GM13976 (cell line): ENCODE measurements at regions of chr3 and their contacts with region 1.

Region 1: GRCh38 chr3:11335056-11335608 is 62.9 kb downstream of the ATG7 start:
- DNase-seq: peak; percentile 69
- CTCF ChIP-seq: peak; percentile 62

Region 2: GRCh38 chr3:10945683-10946287 is 389.3 kb before region 1 on chr3:
- in situ Hi-C with region 1: loop called (anchors 25 kb)
- DNase-seq: peak; percentile 81
- CTCF ChIP-seq: peak; percentile 75

Region 3: DNA sequence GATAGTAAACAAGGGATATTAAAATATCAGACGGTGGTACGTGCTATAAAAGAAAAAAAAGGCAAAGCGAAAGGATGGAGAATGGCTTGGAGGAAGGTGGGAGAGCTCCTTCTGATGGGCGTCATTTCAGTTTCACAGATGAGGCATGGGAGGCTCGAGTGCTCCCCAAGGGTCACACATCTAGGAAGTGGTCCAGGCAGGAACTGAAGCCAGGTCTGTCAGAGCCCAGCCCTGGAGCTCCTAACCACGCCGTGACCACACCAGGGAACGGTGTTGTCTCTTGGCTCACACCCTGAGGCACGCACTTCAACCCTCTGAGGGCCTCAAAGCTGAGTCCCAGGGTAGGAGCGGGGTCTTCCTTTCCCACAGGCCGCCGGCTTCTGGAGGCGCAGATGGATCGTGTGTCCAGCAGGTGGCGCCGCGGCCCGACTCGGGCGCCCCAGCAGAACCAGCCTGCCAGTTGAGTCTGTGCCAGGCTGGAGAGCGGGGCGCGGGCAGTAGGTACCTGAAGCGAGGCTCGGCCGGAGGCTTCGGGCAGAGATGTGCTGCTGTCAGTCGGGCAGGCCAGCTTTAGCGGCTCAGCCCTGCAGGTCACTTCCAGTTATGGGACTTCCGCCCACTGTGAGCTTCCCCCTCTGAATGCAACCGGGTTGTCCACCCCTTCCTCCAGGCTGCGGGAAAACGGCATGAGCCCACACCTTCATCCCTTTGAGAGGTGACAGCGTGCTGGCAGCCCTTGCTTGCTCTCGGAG is 274.5 kb before region 1 on chr3:
- in situ Hi-C with region 1: loop called (anchors 25 kb)
- DNase-seq: peak; percentile 79
- CTCF ChIP-seq: peak; percentile 74

Region 4: DNA sequence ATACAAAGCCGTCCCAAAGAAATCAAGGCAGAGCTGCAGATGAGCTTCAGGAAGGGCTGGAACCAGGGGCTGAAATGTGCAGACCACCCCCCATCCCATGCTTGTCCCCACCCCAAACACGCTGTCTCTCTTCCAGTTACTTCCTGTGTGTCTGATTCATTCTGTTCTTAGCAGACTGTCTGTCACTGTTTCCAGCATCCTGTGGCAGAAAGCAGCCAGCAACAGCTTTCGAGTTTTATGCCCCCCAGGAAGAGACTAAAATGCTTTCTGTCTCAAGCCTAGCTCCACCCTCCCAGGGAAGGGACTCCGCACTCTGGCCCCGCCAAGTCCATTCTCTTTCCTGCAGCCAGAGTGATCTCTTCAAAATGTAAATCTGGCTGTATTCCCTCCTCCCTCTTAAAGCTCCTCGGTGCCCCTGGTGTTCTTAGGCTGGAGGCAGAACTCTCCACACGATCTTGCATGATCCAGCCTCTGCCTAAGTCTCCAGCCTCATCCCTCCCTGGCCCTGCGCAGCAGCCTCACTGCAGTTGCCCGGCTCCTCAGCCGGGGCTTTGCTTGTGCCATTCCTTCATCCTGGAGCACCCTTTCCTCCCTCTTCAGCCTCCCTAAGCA is 139.3 kb before region 1 on chr3:
- in situ Hi-C with region 1: no loop called
- DNase-seq: no peak
- CTCF ChIP-seq: no peak

Region 5: GRCh38 chr3:11236595-11237461 is 98.3 kb before region 1 on chr3:
- in situ Hi-C with region 1: loop called (anchors 10 kb)
- DNase-seq: peak; percentile 73
- CTCF ChIP-seq: peak; percentile 62

Region 6: GRCh38 chr3:11248593-11248992 is 86.5 kb before region 1 on chr3:
- in situ Hi-C with region 1: no loop called
- DNase-seq: no peak
- CTCF ChIP-seq: no peak